AG04449 (cell line): ENCODE measurements at regions of chr4 and their contacts with region 1.

Region 1: DNA sequence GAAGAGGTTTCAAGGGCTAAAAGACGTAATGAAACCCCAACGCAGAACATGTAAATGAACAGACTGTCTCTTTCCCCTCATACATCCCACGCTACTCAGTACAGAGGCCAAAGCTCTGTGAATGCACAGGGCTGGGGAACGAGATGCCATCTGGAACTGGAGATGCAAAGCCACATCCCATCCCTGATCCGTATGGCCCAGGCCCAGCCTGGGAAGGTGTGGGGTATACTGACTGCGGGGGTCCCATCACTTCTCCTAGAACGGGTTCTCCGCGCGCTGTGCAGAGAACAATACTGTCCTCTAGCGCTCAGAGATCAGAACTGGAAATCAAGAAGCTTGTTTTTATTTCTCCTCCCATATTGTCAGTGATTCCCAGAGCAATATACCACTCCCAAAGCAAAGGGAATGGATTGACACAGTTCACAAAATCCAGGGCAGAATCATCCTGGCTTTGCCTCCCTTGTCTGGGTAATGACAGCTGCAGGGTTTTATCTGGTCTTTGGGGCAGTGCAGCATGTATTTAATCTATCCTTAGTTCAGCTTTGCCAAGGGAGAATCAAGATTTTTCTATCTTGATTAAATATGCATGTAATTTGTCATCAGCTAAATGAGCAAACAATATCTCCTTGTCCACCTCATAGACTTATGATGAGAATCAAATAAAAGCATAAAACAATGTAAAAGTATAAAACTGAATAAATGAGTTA is 47.3 kb upstream of the TLR3 start:
- DNase-seq: no peak
- H3K4me3 ChIP-seq: no peak overlapping the region
- CTCF ChIP-seq: peak; percentile 76

Region 2: DNA sequence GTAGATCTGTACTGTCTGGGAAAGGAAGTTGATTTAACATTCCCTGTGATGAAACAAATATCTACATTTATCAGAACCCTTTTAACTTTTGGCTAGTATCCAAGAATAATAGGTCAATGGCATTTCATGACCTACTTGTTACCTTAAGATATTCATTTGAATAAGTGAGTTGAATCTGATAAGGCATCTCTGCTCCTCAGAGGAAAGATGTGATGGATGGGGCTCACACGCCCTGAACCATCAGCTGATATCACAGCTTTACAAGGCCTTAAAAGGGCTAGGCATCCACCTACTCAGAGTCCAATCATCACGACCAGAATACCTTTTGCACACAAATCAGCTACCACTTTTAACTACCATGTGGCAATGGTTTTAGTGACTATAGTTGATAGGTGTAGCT is 396.1 kb before region 1 on chr4:
- CTCF ChIA-PET with region 1: interaction called, 16 read pairs
- POLR2A ChIA-PET with region 1: no interaction called
- DNase-seq: no peak
- H3K4me3 ChIP-seq: no peak overlapping the region
- CTCF ChIP-seq: no peak

Region 3: DNA sequence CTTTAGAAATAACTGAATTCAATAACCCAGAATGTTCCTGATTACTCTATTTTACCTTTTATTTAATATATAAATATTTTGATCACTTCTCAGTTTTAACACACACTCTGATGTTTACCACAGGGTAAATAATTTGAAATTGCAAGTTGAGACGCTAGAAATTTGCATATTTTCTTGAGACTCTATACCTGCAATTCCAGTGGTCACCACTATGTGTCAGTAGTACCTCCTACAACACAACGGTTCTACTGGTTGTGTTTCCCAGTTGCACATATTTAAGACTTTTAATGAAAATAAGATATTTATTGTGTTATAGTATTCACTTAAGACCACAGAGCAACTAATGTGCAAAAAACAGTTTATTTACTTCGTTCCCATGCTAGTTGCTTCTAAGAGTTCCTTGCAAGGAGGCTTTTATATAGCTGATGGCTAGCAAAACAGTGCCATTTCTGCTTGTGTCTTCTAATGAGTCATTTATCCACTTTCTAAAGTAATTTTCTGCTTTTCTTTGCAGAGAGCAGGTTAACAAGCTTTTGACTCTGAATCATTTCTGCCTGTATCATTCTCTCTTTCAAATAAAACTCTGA is 387.5 kb before region 1 on chr4:
- CTCF ChIA-PET with region 1: interaction called, 155 read pairs
- POLR2A ChIA-PET with region 1: no interaction called
- DNase-seq: no peak
- H3K4me3 ChIP-seq: no peak overlapping the region
- CTCF ChIP-seq: peak; percentile 20

Region 4: GRCh38 chr4:185847352-185848107 is 174.1 kb before region 1 on chr4:
- CTCF ChIA-PET with region 1: no interaction called
- POLR2A ChIA-PET with region 1: no interaction called
- DNase-seq: peak; percentile 82
- H3K4me3 ChIP-seq: peak overlapping the region; percentile 29
- CTCF ChIP-seq: no peak